ENCODE measurements at regions of chr15 and their contacts with region 1.

Region 1: GRCh38 chr15:57866149-57866736 is 159.7 kb downstream of the POLR2M start:
- DNase-seq: peak; percentile 86

Region 2: DNA sequence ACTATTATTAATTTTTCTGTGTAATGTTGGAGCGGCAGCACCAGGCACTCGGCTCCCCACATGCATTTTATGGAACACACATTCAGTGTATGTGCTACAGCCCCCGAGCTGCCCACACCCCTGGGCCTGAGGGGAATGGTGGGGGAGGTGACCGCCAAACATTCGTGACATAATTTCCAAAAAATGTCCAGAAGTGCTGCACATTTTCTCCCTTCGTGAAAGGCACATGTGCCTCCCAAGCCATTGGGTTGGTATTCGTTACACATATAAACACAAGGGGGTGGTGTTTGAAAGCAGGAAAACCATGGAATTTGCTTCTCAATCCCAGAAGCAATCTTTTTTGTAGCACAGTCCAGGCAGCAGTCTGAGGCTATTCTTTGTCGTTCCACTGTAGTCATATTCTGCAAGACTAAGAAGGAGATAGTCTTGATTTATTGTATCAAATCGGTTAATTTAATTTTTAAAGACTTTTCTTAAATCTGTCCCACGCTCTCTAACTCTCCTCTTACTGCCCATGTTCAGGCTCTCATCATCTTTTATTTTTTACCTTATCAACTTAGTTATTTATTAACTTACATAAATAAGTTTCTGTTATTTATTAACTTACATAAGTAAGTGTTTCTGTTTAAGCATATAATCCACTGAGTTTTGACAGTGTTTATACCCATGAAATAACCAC is 198.9 kb before region 1 on chr15:
- intact Hi-C with region 1: loop called in 1 of 2 experiments (anchors 10 kb)
- DNase-seq: no peak

Region 3: DNA sequence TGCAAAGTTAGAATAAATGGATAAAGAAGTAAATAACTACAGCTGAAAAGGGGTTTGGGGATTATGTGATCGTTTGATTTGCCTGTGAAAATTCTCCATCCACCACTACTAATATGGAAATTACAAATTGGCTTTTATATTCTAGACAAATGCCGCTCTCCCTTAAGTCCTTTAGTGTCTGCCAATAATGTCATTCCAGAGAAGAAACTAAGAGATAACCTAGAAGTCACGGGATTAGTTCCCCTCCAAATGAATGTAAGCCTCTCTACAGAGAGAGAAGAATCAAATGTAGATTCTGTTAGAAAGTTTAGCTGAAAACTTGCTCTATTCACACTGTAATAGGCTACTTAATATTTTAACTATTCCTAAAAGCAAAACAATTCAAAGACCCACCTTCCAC is 107.3 kb after region 1 on chr15:
- intact Hi-C with region 1: no loop called
- DNase-seq: no peak

Region 4: GRCh38 chr15:58066042-58066867 is 200.0 kb after region 1 on chr15:
- intact Hi-C with region 1: loop called (anchors 5 kb)
- DNase-seq: peak; percentile 89